Activated CD4-positive, alpha-beta T cell treated with anti-CD3 and anti-CD28 coated beads, Interleukin-2, amount 10 ng/mL, durations not matched to agents 24 days and 14 days (primary cell): ENCODE measurements at regions of chr14 and their contacts with region 1.

Region 1: DNA sequence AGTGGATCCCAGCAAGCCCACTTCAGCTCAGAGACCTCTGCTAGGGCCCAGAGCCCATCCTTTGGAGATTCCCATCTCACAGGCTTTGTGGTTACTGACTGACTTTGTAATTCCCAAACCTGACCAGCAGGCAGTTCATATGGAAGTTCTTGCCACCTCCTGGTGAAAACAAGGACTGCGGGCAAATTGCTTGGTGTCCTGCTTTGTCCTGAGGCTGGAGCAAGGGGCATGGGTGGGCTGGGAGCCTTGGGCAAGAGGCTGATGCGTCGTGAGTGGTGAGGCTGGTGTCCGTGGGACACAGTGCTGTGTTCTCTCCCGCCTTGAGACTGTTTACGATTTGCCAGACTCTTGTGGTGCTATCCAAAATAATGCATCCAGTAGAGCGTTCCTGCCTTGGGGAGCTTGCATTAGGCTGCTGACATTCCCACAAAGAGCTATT is 91.0 kb downstream of the LRRC74A start:
- DNase-seq: no peak
- H3K4me3 Mint-ChIP-seq: no peak overlapping the region
- H3K27ac Mint-ChIP-seq: no peak overlapping the region
- H3K4me1 Mint-ChIP-seq: peaks cover 41% of the 10 kb centered on the region
- H3K27me3 Mint-ChIP-seq: no peaks in the 10 kb centered on the region

Region 2: DNA sequence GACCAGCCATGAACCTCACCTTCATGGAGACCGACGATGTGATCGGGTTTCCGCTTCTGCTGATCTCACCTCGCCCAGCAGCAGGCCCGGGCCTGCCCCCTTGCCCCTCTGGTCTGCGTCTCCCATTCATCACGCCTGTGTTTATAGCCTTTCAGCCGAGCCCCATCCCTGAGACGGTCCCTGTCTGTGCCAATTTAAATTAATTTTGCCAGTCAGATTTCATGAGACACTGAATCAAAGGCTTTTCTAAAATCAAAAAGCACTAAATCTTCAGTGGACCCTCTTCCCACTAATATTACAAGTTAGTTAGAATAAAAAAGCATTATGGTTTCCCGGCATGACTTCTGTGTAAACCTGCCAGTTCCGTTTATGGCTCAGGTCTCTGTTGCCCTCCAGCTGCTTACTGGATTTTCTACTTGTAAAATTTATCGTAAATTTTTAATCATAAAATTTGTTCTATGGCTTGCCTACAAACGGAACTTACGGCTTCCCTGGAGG is 385.3 kb before region 1 on chr14:
- intact Hi-C with region 1: no loop called
- DNase-seq: no peak
- H3K4me3 Mint-ChIP-seq: no peak overlapping the region
- H3K27ac Mint-ChIP-seq: no peak overlapping the region
- H3K4me1 Mint-ChIP-seq: no peaks in the 10 kb centered on the region
- H3K27me3 Mint-ChIP-seq: no peaks in the 10 kb centered on the region

Region 3: GRCh38 chr14:76876076-76876475 is 41.1 kb before region 1 on chr14:
- intact Hi-C with region 1: loop called (anchors 1 kb)
- DNase-seq: peak; percentile 82
- H3K4me3 Mint-ChIP-seq: no peak overlapping the region
- H3K27ac Mint-ChIP-seq: no peak overlapping the region
- H3K4me1 Mint-ChIP-seq: peaks cover 2% of the 10 kb centered on the region
- H3K27me3 Mint-ChIP-seq: peaks cover 3% of the 10 kb centered on the region

Region 4: DNA sequence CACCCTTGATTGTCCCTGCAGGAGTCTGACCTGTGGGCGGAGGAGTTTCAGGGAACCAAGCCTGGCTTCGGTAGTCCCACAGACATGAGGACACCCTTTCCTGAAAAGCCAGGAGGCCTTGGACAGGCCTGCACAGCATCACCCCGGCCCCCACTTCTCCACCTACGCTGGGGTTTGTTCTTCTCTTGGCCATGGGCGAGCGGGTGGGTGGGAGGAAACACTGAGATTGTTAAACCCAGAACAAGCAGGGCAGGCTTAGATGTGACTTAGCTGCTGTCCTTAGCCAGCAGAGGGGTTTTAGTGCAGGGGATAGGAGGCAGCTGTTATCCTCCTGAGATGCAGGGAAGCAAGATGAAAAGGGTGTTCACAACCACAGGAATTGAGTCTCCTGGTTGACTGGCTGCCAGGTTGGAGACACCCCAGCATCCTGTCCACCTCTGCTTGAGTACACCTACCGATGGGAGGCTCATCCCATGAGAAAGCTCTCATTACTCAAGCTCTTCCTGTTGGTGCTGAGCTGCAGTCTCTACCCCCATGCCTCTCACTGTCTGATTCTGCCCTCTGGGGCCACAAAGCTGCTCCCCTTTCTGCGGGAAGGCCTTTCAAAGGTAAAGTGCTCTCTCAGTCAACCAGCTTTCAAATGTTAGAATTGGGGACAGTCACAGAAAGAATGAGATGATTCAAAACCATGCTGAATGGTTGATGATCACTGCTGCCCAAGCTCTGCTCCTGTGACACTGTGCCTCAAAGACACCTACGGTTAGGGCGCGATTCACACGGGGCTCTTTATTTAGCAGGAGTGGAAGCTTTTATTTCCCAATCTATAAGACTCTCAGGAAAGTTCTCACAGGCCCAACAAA is 25.0 kb after region 1 on chr14:
- intact Hi-C with region 1: loop called (anchors 2 kb)
- DNase-seq: no peak
- H3K4me3 Mint-ChIP-seq: no peak overlapping the region
- H3K27ac Mint-ChIP-seq: peak overlapping the region; percentile 71
- H3K4me1 Mint-ChIP-seq: peaks cover 22% of the 10 kb centered on the region
- H3K27me3 Mint-ChIP-seq: no peaks in the 10 kb centered on the region

Region 5: DNA sequence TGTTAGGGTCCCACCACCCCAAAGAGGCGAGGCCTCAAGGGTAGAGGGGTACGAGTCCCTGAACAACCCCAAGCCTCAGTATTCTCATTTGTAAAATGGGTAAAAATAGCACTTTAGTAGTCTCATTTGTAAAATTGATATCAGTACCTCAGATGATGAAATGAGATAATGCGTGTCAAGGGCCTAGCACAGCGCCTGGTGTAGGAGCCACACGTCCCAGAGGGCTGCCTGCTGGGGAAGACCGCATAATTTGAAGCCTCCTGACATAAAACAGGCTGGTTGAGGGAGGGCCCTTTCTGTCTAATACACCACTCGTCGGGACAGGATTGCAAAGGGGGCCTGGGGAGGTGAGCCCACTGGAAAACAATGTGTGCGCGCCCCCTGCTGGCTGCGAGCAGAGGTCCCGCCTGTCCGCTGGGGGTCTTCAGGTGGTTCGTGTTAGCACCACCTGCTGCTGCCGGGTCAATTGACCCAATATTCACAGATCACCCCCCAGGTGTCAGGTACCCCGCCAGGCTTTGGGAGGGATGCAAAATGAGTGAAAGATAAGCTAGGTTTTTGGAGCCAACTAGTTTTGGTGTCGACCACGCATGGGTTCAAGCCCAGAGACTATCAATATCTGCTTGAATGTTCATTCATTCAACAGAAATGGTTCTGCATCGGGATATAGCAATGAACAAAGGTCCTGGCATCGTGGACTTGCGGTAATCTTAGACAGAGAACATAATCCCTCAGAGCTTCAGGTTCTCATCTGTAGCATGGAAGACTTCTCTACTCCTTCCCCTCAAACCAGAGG is 136.1 kb after region 1 on chr14:
- intact Hi-C with region 1: loop called (anchors 1 kb)
- DNase-seq: peak; percentile 91
- H3K4me3 Mint-ChIP-seq: no peak overlapping the region
- H3K27ac Mint-ChIP-seq: no peak overlapping the region
- H3K4me1 Mint-ChIP-seq: peaks cover 7% of the 10 kb centered on the region
- H3K27me3 Mint-ChIP-seq: no peaks in the 10 kb centered on the region

Region 6: DNA sequence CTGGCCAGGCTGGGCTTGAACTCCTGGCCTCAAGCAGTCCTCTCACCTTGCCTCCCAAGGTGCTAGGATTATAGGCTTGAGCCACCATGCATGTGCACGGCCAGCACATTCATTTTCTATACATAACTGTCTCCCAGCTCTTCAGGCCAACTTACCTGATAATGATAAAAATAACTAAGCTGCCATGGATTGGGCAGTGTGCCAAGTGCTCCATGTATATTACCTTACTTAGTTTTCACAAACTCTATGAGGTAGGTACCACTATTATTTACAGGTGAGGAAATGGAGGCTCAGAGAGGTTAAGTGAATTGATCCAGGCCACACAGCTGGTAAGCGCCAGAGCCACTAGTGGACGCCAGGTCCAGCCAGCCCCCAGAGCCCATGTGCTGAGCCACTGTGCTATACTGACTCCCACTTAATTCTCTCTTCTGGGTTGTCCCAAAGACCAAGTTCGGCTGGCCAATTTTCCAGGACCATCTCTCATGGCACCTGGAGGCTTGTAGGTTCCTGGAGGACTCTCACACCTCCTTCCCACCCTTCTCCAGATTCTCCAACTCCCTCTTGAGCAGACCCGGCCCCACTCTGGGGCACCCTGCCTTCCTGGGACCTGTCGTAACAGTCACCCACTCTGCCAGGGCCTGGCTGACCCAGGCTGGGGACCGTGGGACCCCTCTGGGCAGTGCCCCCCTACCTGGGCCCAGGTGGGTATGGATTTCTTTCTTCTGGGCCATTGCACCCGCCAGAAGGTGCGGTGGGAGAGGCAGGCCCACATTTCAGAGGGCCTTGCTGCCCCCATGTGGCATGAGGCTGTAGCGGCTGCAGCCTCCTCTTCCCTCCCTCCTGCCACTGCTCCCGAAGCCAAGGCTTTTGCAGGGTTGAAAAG is 150.7 kb after region 1 on chr14:
- intact Hi-C with region 1: loop called (anchors 1 kb)
- DNase-seq: peak; percentile 88
- H3K4me3 Mint-ChIP-seq: no peak overlapping the region
- H3K27ac Mint-ChIP-seq: no peak overlapping the region
- H3K4me1 Mint-ChIP-seq: peaks cover 3% of the 10 kb centered on the region
- H3K27me3 Mint-ChIP-seq: peaks cover 11% of the 10 kb centered on the region

Region 7: DNA sequence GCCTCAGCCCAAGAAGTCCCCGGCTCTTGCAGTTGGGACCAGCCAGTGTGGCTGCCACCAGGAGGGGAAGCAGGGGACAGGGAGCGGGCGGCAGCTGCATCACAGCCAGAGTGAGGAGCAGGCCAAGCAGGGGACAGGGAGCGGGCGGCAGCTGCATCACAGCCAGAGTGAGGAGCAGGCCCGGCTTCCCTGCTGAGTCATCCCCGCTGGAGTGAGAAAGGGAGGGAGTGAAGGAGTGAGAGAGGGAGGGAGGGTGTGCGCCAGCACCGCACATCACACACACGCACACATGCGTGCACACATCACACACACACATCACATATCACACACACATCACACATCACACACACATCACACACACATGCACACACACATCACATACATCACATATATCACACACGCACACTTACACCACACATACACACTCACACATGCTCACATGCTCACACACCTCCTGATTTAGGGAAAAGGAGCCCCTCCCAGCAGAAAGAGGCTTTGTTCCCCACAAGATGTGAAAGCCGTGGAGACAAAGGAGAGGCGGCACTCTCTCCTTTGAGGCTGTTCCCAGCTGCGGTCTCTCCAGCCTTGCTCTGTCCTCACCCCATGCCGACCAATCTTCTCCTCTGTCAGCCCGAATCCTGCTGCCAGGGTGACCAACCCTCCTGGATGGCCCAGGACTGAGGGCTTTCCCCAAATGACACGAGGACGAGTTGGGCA is 241.2 kb after region 1 on chr14:
- intact Hi-C with region 1: no loop called
- DNase-seq: no peak
- H3K4me3 Mint-ChIP-seq: no peak overlapping the region
- H3K27ac Mint-ChIP-seq: no peak overlapping the region
- H3K4me1 Mint-ChIP-seq: no peaks in the 10 kb centered on the region
- H3K27me3 Mint-ChIP-seq: peaks cover 36% of the 10 kb centered on the region

Region 8: DNA sequence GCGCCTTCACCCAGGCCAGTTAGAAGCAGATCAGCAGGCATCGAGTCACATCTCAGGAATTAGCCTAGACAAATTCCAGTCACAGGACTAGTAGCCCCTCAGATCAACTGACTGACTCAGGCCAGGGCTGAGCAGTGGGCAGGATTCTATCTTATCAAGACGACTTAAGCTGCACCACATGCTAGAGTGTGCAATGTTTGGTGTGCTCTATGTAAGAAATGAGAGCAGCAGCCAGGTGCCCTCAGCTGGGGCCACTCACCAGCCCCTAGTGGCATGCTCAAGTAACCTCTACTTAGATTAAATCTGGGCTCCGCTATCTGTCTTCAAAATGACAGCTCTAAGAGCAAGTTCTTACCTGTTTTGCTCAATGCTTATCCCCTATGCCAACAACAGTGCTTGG is 373.6 kb after region 1 on chr14:
- intact Hi-C with region 1: no loop called
- DNase-seq: no peak
- H3K4me3 Mint-ChIP-seq: no peak overlapping the region
- H3K27ac Mint-ChIP-seq: no peak overlapping the region
- H3K4me1 Mint-ChIP-seq: no peaks in the 10 kb centered on the region
- H3K27me3 Mint-ChIP-seq: no peaks in the 10 kb centered on the region